ENCODE measurements at regions of chr17 and their contacts with region 1.

Region 1: GRCh38 chr17:27332485-27333409 is 38.8 kb downstream of the WSB1 start:
- DNase-seq: peak; percentile 98 to 99
- ATAC-seq: peak; percentile 91 to 94 (median 92)
- H3K4me3 ChIP-seq: peak overlapping the region; percentile 65
- H3K27ac ChIP-seq: peak overlapping the region; percentile 91
- H3K4me1 ChIP-seq: peaks cover 21% of the 10 kb centered on the region
- H3K27me3 ChIP-seq: no peaks in the 10 kb centered on the region
- CTCF ChIP-seq: peak; percentile 85

Region 2: DNA sequence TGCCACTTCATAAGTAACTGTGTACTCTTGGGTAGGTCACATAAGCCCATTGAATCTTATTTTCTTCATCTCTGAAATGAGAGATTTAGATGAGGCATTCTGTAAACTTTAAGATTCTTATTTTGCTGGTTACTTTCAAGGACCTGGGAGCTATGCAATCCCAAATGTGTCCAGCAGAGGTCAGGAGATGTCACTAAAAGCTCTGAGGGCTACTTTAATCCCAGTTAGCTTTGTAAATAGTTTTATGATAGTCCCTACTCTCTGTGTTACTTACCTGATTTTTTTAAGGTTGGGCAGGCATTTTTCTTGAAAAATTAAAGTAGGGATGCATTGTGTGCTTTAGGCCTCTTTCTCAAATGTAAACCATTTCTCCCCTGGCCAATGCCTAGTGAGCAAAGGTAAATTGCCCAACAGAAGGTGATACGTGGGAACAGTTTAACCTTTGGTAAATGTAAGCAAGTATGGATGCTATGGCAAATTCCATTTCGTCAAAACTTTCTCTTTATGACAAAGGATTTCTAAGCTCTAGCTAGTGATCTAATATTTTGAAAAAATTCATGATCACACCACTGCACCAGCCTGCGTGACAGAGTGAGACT is 95.9 kb before region 1 on chr17:
- intact Hi-C with region 1: loop called (anchors 2 to 5 kb)
- DNase-seq: peak; percentile 57 to 67
- ATAC-seq: peak; percentile 85 to 90 (median 88)
- H3K4me3 ChIP-seq: no peak overlapping the region
- H3K27ac ChIP-seq: no peak overlapping the region
- H3K4me1 ChIP-seq: no peaks in the 10 kb centered on the region
- H3K27me3 ChIP-seq: no peaks in the 10 kb centered on the region
- CTCF ChIP-seq: peak; percentile 99

Region 3: GRCh38 chr17:27245230-27245696 is 87.5 kb before region 1 on chr17:
- intact Hi-C with region 1: loop called (anchors 1 to 5 kb)
- DNase-seq: peak; percentile 87 to 92
- ATAC-seq: peak; percentile 92 to 97 (median 96)
- H3K4me3 ChIP-seq: peak overlapping the region; percentile 43
- H3K27ac ChIP-seq: peak overlapping the region; percentile 89
- H3K4me1 ChIP-seq: peaks cover 34% of the 10 kb centered on the region
- H3K27me3 ChIP-seq: no peaks in the 10 kb centered on the region
- CTCF ChIP-seq: peak; percentile 66

Region 4: DNA sequence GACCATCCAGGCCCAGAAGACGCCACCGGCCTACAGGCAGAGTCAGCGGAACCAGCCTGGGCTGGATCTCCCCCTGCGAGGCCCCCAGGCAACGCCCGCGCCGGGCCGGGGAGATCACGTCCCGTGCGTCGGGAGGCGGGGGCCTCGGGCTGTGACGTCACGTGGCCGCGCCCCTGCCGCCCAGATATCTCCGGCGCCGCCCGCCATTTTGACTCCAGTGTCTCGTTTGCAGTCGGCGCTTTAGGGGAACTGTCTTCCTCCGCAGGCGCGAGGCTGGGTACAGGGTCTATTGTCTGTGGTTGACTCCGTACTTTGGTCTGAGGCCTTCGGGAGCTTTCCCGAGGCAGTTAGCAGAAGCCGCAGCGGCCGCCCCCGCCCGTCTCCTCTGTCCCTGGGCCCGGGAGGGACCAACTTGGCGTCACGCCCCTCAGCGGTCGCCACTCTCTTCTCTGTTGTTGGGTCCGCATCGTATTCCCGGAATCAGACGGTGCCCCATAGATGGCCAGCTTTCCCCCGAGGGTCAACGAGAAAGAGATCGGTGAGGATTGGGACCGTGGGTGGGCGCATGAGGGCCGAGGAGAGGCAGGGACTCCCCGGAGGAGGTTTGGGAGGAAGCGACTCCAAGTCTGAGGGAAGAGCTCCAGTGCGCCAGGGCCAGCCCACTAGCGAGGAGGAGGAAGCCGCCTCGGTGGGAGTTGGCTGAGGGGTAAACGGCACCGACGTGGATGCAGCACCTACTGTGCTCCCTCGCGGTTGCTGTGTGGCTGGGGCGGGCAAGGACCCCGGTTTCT is 38.7 kb before region 1 on chr17 and contains the start of gene WSB1:
- intact Hi-C with region 1: loop called in 1 of 2 experiments (anchors 2 kb)
- DNase-seq: peak; percentile 93 to 96
- ATAC-seq: peak; percentile 96 to 97 (median 97)
- H3K4me3 ChIP-seq: peak within 1 kb of the TSS; percentile 90
- H3K27ac ChIP-seq: peak within 1 kb of the TSS; percentile 96
- H3K4me1 ChIP-seq: peaks cover 29% of the 10 kb centered on the region
- H3K27me3 ChIP-seq: no peaks in the 10 kb centered on the region
- CTCF ChIP-seq: no peak
- total RNA-seq, gene WSB1: 35.3 to 42.8 (median 39.5) TPM

Region 5: GRCh38 chr17:27384261-27384711 is 51.5 kb after region 1 on chr17:
- intact Hi-C with region 1: loop called in 1 of 2 experiments (anchors 2 kb)
- DNase-seq: peak; percentile 73 to 82
- ATAC-seq: peak; percentile 94 to 96 (median 96)
- H3K4me3 ChIP-seq: no peak overlapping the region
- H3K27ac ChIP-seq: peak overlapping the region; percentile 53
- H3K4me1 ChIP-seq: peaks cover 11% of the 10 kb centered on the region
- H3K27me3 ChIP-seq: peaks cover 0 to 2% (median 0%) of the 10 kb centered on the region in 3 donors
- CTCF ChIP-seq: no peak

Region 6: DNA sequence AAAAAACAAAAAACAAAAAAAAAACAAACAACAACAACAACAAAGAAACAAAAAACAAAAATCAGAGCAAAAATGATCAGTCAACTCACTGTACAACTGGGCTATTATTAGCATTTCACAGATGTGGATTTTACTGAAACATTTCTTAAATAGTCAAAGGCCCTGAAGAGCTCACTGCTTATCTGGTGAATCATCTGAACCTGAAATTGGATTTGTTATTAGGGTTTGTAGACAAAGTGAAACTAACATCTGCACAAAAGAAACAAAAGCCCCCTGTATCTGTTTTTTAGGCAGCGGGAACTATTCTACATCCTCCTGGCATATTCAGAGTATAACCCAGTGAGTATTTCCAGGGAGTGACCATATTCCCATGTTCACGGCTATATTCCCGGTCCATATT is 90.9 kb after region 1 on chr17:
- intact Hi-C with region 1: no loop called
- DNase-seq: no peak
- ATAC-seq: no peak
- H3K4me3 ChIP-seq: no peak overlapping the region
- H3K27ac ChIP-seq: no peak overlapping the region
- H3K4me1 ChIP-seq: no peaks in the 10 kb centered on the region
- H3K27me3 ChIP-seq: no peaks in the 10 kb centered on the region
- CTCF ChIP-seq: no peak

Measured in psoas muscle (tissue), 8 donors.